ENCODE measurements at regions of chr15 and their contacts with region 1.

Region 1: GRCh38 chr15:87193481-87193880 is 1063.1 kb downstream of the NTRK3 start:
- DNase-seq: no peak
- H3K4me3 ChIP-seq: no peak overlapping the region
- H3K27ac ChIP-seq: no peak overlapping the region
- H3K4me1 ChIP-seq: no peaks in the 10 kb centered on the region
- H3K27me3 ChIP-seq: no peaks in the 10 kb centered on the region
- CTCF ChIP-seq: no peak

Region 2: GRCh38 chr15:87144775-87145174 is 48.7 kb before region 1 on chr15:
- intact Hi-C with region 1: no loop called
- DNase-seq: no peak
- H3K4me3 ChIP-seq: no peak overlapping the region
- H3K27ac ChIP-seq: no peak overlapping the region
- H3K4me1 ChIP-seq: no peaks in the 10 kb centered on the region
- H3K27me3 ChIP-seq: no peaks in the 10 kb centered on the region
- CTCF ChIP-seq: no peak

Region 3: GRCh38 chr15:87245592-87245991 is 52.1 kb after region 1 on chr15:
- intact Hi-C with region 1: loop called (anchors 10 kb)
- DNase-seq: no peak
- H3K4me3 ChIP-seq: no peak overlapping the region
- H3K27ac ChIP-seq: no peak overlapping the region
- H3K4me1 ChIP-seq: no peaks in the 10 kb centered on the region
- H3K27me3 ChIP-seq: no peaks in the 10 kb centered on the region
- CTCF ChIP-seq: no peak

Region 4: DNA sequence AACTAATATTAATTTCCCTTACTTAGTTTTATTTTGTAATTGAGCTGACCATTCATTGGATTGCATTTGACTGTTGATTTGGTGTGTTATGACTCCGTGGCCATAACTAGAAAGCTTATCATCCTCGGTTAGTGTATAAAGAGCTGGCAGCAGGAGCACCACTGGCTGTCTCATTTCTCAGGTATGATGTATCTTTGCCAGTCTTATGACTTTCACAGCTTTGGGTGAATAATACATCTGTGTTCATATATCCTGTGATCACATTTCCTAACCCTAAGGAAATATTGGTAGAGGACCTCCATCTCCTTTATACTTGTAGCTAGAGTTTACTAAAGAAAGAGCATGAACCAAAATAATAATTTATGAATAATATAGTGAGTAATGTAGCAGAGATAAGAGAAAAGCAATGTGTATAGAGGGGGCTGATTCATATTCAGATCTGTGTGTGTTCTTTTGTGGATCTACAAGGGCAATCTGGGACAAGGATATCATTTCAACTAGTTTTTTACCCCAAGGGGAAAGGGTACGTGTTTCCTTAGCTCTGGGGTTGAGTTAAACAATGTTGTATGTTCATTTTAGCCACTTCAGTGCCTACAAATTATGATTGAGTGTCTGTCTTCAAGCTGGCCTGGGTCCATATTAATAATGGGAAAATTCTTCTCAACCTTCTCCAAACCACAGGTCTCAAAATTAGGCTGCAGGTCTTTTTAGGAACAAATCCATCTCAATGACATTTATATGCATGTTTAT is 161.4 kb after region 1 on chr15:
- intact Hi-C with region 1: no loop called
- DNase-seq: no peak
- H3K4me3 ChIP-seq: no peak overlapping the region
- H3K27ac ChIP-seq: no peak overlapping the region
- H3K4me1 ChIP-seq: no peaks in the 10 kb centered on the region
- H3K27me3 ChIP-seq: no peaks in the 10 kb centered on the region
- CTCF ChIP-seq: no peak